Spleen (tissue), 13 donors: ENCODE measurements at regions of chr1 and their contacts with region 1.

Region 1: GRCh38 chr1:184075055-184076029 is 23.8 kb downstream of the TSEN15 start:
- DNase-seq: no peak
- H3K4me3 ChIP-seq: no peak overlapping the region
- H3K27ac ChIP-seq: no peak overlapping the region
- H3K4me1 ChIP-seq: peaks cover 0 to 8% (median 0%) of the 10 kb centered on the region in 6 donors
- H3K27me3 ChIP-seq: no peaks in the 10 kb centered on the region
- CTCF ChIP-seq: peak in 10 of 11 experiments; percentile 36 to 73 (median 60)
- POLR2A ChIP-seq: no peak

Region 2: DNA sequence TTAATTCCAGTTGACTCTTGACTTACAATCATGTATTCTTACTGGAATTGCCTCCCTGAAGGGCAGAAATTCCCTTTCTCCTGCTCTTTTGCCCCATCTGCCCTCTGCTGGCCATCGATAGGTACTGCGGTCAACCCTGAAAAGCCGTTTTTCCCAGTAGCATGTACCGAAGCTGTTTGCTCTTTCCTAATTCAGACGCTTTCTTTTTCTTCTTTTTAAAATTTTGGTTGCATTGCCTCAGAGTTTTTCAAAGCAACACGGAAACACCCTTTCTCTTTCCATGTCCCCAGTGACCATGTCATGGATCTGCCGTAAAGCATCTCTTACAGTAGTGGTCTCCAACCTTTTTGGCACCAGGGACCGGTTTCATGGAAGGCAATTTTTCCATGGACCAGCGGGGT is 147.3 kb after region 1 on chr1:
- intact Hi-C with region 1: loop called (anchors 10 kb)
- DNase-seq: no peak
- H3K4me3 ChIP-seq: no peak overlapping the region
- H3K27ac ChIP-seq: no peak overlapping the region
- H3K4me1 ChIP-seq: peaks cover 0 to 7% (median 2%) of the 10 kb centered on the region in 6 donors
- H3K27me3 ChIP-seq: no peaks in the 10 kb centered on the region
- CTCF ChIP-seq: peak; percentile 80 to 94 (median 89)
- POLR2A ChIP-seq: no peak

Region 3: GRCh38 chr1:184664042-184664655 is 588.8 kb after region 1 on chr1:
- intact Hi-C with region 1: loop called (anchors 10 kb)
- DNase-seq: peak; percentile 86
- H3K4me3 ChIP-seq: peak overlapping the region in 4 of 8 donors; percentile 1 to 53 (median 22)
- H3K27ac ChIP-seq: no peak overlapping the region
- H3K4me1 ChIP-seq: peaks cover 0 to 15% (median 10%) of the 10 kb centered on the region in 6 donors
- H3K27me3 ChIP-seq: peaks cover 0 to 20% (median 0%) of the 10 kb centered on the region in 7 donors
- CTCF ChIP-seq: peak; percentile 54 to 86 (median 79)
- POLR2A ChIP-seq: no peak

Region 4: GRCh38 chr1:184691719-184692324 is 616.5 kb after region 1 on chr1:
- intact Hi-C with region 1: loop called (anchors 10 kb)
- DNase-seq: no peak
- H3K4me3 ChIP-seq: no peak overlapping the region
- H3K27ac ChIP-seq: no peak overlapping the region
- H3K4me1 ChIP-seq: no peaks in the 10 kb centered on the region
- H3K27me3 ChIP-seq: no peaks in the 10 kb centered on the region
- CTCF ChIP-seq: peak in 9 of 11 experiments; percentile 17 to 67 (median 57)
- POLR2A ChIP-seq: no peak